Ovary (tissue), 10 donors: ENCODE measurements at regions of chr2 and their contacts with region 1.

Region 1: DNA sequence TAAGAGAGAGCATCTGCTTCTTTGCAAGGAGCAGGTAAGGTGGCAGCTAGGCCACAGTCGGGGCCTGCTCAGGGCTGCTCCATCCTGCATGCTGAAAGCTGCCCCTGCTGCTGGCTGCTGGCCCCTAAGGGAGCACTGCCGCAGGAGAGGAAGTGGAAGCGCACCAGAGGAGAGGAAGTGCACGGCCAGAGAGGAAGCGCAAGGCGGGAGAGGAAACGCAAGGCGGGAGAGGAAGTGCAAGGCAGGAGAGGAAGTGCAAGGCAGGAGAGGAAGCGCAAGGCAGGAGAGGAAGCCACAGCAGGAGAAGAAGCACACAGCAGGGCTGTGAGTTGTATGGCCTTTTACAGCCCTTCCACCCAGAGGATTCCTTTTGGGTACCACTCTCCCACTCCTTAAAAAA is 539.0 kb upstream of the TNP1 start:
- DNase-seq: no peak
- H3K4me3 ChIP-seq: no peak overlapping the region
- H3K27ac ChIP-seq: no peak overlapping the region
- H3K4me1 ChIP-seq: peaks cover 26% of the 10 kb centered on the region
- H3K27me3 ChIP-seq: no peaks in the 10 kb centered on the region
- CTCF ChIP-seq: no peak
- EP300 ChIP-seq: no peak
- POLR2A ChIP-seq: no peak

Region 2: DNA sequence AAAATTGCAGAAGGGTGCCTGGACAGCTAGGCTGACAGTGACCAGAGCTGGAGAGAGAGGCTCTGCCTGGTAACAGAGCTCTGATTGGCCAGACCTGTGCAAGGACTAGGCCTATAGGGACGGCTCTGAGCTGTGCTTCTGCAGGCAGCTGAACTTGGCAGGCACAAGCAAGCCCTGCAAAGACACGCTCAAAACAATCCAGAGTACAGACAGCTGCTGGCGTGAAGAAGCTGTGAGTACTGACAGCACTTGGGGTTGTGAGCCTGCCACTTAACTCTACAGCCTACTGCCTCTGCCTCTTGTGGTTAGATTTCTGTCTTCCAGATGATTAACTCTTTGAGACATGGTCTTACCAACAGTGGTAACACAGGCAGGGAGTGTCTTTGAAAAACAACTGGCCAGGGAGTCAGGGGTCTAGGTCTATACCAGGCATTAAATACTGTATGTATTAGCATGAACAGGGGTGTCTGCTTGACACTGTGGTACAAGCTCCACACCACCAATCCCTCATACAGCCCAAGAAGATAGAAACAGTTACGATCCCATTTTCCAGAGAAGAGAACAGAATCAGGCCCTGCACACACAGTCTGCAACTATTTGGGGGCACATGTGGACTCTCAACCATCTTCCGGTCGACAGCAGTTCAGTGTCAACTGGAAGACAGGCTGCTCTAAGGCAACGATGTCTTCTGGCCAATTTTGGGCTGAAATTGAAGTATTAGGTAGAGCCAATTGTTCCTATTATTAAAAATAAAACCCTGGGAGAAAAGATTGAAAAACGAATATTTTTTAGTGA is 35.5 kb after region 1 on chr2:
- intact Hi-C with region 1: loop called in 1 of 4 experiments (anchors 5 kb)
- DNase-seq: peak; percentile 85 to 91 (median 88)
- H3K4me3 ChIP-seq: peak overlapping the region; percentile 3
- H3K27ac ChIP-seq: peak overlapping the region in 1 of 2 donors; percentile 65
- H3K4me1 ChIP-seq: peaks cover 32% of the 10 kb centered on the region
- H3K27me3 ChIP-seq: no peaks in the 10 kb centered on the region
- CTCF ChIP-seq: no peak
- EP300 ChIP-seq: no peak
- POLR2A ChIP-seq: no peak